ENCODE measurements at regions of chr3 and their contacts with region 1.

Region 1: DNA sequence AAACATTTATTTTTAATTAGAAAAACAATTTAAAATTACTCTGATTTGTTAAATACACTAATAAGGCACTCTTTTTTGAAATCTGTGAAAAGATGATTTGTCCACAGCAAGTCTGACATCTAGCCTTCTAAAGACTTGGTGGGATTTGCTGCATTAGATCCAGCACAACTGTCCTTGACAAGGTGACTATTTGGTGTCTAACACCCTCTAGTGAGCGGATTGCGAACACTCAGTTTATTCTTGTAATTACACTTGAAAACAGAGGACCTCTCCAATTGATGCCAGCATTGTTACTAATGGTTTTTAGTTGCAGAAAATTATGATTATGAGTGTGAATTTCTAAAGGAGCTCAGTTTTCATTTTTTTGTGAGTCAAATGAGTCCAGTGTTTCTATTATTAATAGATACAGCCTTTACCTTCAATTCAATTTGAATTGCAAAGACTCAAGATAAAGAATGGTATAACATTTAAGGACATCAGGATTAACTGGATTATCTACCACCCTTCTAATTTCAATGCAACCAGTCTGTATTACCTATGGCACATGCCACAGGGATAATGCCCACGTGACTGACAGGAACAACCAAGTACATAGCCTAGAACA is 29.7 kb upstream of the STRIT1 start:
- DNase-seq: peak; percentile 69 to 90
- H3K4me3 ChIP-seq: no peak overlapping the region
- H3K4me1 ChIP-seq: peaks cover 10% of the 10 kb centered on the region
- H3K27me3 ChIP-seq: no peaks in the 10 kb centered on the region

Region 2: DNA sequence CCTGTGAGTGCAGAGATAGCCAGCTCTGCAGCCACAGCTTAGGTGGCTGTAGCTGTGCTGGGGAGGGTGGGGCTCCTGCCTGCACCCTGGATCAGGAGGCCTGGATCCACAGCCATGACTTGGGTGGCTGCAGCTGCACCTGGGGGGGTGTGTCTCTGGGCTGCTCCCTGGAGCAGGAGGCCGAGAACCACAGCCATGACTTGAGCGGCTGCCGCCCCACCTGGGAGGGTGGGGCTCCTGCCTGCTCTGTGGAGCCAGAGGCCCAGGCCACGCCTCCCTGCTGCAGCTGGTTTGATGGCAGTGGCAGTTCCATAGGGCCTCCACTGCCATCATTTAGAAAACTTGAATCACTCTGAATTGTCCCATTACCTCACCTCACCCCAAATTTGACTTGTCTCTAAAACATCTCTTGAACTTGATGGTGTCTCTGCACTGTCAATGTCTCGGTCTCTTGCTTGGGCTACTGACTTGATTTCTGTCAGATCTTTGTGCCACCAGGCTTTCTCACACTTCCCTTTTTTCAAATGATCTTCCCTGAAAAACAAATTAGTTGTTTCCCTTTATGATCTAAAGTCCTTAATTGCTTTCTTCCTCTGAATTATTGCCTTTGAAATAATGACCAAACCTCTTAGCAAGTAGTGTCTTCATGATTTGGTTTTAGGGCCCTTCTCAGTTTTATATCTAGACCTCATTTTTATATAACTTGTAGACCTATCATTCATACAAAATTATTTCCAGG is 556.2 kb before region 1 on chr3:
- in situ Hi-C with region 1: loop called (anchors 10 kb)
- DNase-seq: no peak
- H3K4me3 ChIP-seq: no peak overlapping the region
- H3K4me1 ChIP-seq: no peaks in the 10 kb centered on the region; the same call in none of the 2 replicates
- H3K27me3 ChIP-seq: no peaks in the 10 kb centered on the region

Region 3: GRCh38 chr3:154954753-154955152 is 368.4 kb before region 1 on chr3:
- in situ Hi-C with region 1: loop called (anchors 10 kb)
- DNase-seq: peak in 1 of 2 experiments; percentile 68
- H3K4me3 ChIP-seq: no peak overlapping the region
- H3K4me1 ChIP-seq: no peaks in the 10 kb centered on the region
- H3K27me3 ChIP-seq: no peaks in the 10 kb centered on the region

Region 4: DNA sequence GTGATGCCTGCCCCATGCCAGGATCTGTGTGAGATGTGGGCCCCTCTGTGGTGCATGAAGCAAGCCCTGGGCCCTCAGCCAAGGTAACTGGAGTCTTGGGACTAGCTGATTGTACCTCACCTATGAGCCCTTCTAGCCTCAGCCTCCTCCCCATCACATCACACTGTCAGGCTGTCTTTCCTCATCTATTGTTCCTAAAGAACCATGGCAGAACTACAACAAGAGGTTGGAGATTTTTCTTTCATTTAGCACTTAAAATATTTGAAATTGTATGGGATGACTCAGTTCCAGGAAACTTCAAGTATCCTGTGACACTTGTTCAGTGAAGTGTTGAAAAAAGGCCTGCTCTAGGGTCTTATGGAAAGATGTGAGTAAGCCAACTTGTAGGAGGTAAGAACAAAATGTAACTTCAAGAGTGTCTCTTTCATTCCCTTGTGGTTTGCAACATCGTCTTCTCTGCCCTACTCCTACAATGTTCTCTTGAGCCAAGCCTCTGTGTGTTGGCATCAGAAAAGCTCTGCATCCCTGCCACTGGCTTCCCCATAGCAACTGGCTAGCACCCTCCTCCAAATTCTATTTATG is 1292.5 kb after region 1 on chr3:
- in situ Hi-C with region 1: no loop called
- DNase-seq: no peak
- H3K4me3 ChIP-seq: no peak overlapping the region
- H3K4me1 ChIP-seq: no peaks in the 10 kb centered on the region
- H3K27me3 ChIP-seq: no peaks in the 10 kb centered on the region